Panc1 (cell line): ENCODE measurements at regions of chr7 and their contacts with region 1.

Region 1: GRCh38 chr7:25093268-25093826 is 31.7 kb downstream of the CYCS start:
- DNase-seq: peak; percentile 76
- ATAC-seq: peak; percentile 94
- H3K4me3 ChIP-seq: peak overlapping the region; percentile 23 to 53
- H3K27ac ChIP-seq: no peak overlapping the region
- H3K4me1 ChIP-seq: no peaks in the 10 kb centered on the region
- H3K27me3 ChIP-seq: peaks cover 6% of the 10 kb centered on the region; the same call in 1 of the 2 replicates
- CTCF ChIP-seq: peak; percentile 98

Region 2: DNA sequence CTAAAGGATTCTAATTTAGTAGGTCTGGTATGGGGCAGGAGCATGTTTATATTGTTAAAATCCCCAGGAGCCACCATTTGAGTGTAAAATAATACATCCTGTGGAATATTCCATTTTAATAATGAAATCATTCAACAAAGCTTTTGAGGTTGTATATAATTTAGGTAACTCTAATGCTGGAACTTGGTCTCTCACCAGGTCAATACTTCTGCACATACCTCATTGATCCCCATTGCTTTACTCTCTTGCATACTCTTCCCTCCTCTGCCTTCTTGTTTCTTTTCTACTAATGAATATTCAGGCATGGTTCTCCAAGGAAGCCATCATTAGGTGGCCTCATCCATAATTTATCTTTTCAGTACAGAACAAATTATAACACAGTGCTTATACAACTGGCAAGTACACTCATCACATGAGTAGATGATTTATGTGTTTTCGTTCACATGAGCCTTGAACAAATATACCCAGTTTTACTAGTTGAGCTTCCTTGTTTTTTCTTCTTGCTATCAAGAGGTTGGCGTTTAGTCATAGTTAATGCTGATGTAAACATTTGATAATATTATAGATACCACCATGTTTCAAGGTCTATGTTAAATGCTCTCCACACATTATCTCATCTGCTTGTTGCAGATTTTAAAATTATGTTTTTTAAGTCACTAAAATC is 512.9 kb before region 1 on chr7:
- CTCF ChIA-PET with region 1: no interaction called
- POLR2A ChIA-PET with region 1: interaction called, 13 read pairs
- in situ Hi-C with region 1: no loop called
- intact Hi-C with region 1: no loop called
- DNase-seq: no peak
- ATAC-seq: no peak
- H3K4me3 ChIP-seq: no peak overlapping the region
- H3K27ac ChIP-seq: no peak overlapping the region; the same call in 1 of the 2 replicates
- H3K4me1 ChIP-seq: peaks cover 20% of the 10 kb centered on the region
- H3K27me3 ChIP-seq: no peaks in the 10 kb centered on the region
- CTCF ChIP-seq: no peak

Region 3: GRCh38 chr7:24715661-24716479 is 377.5 kb before region 1 on chr7:
- CTCF ChIA-PET with region 1: no interaction called
- POLR2A ChIA-PET with region 1: no interaction called
- in situ Hi-C with region 1: no loop called
- intact Hi-C with region 1: loop called (anchors 10 kb)
- DNase-seq: peak; percentile 25
- ATAC-seq: peak; percentile 89
- H3K4me3 ChIP-seq: no peak overlapping the region
- H3K27ac ChIP-seq: no peak overlapping the region
- H3K4me1 ChIP-seq: no peaks in the 10 kb centered on the region
- H3K27me3 ChIP-seq: no peaks in the 10 kb centered on the region
- CTCF ChIP-seq: peak; percentile 80

Region 4: DNA sequence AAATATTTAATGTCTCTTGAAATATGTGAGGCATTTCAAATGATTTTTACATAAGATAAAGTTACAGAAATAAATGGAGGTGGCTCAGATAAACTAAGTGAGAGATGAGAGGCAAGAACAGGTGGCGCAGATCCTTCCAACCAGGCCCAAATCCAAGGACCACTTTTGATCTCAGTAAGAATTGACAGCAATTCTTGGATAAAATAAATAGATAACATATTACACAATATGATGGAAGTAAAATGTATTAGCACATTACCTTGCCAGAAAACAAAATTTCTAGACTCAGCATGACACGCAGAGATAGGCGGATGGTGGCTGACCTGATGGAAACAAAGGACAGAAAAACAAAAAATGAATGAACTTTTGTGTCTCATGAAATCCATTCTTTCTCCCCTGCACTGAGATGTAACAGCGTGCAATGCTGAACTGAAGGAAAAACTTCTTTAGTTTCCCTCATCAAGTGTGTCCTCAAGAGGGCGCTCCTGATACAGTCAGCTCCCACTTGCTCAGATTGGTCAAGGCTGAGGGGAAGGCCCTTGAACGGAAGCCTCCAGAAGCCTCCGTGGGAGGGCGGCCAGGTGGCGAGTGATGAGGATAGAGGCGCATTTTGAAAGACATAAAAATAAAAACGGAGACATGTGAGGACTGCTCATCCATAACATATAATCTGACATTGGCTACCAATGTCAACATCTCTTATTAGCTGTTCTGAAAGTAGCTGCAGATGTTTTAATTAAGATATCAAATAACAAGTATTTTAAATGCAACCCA is 273.2 kb before region 1 on chr7:
- CTCF ChIA-PET with region 1: interaction called, 16 read pairs
- POLR2A ChIA-PET with region 1: no interaction called
- in situ Hi-C with region 1: no loop called
- intact Hi-C with region 1: no loop called
- DNase-seq: peak; percentile 82
- ATAC-seq: peak; percentile 91
- H3K4me3 ChIP-seq: no peak overlapping the region
- H3K27ac ChIP-seq: no peak overlapping the region
- H3K4me1 ChIP-seq: peaks cover 11% of the 10 kb centered on the region; the same call in 1 of the 2 replicates
- H3K27me3 ChIP-seq: no peaks in the 10 kb centered on the region
- CTCF ChIP-seq: peak; percentile 95

Region 5: DNA sequence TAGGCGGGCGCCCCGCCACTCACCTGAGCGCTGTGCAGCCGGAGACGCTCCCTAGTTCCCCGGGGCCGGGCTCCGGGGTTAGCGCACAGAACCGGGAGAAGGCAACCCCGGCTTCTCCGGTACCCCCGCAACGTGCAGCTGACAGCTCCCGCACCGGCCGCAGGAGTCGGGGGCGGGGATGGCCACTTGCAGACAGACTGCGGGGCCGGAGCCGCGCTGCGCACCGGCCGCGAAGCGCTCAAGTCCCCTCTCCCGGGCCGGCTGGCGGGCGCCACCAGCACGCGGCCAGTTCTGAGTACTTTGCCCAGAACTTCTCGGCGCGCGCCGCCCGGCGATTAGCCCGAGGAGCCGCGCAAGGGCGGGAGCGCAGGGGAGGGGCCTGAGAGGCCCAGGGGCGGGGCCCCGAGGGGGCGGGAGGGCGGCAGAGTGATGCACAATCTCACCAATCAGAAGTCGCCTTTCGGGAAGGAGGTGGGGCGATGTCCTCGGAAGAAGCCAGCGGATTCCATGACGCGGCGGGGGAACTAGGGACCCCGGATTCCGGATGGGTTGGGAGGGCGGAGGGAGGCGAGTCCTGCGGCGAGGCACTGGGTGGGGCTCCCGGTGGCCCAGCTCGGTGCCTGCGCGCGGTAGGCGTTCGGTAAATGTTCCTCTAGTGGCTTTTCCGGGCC is 113.3 kb before region 1 on chr7 and contains the start of gene OSBPL3:
- CTCF ChIA-PET with region 1: interaction called, 12 read pairs
- POLR2A ChIA-PET with region 1: no interaction called
- in situ Hi-C with region 1: no loop called
- intact Hi-C with region 1: loop called (anchors 5 kb)
- DNase-seq: peak; percentile 57
- ATAC-seq: peak; percentile 91
- H3K4me3 ChIP-seq: peak within 1 kb of the TSS; percentile 74 to 79
- H3K27ac ChIP-seq: peak within 1 kb of the TSS; percentile 75
- H3K4me1 ChIP-seq: peaks cover 6% of the 10 kb centered on the region; the same call in 1 of the 2 replicates
- H3K27me3 ChIP-seq: peaks cover 12% of the 10 kb centered on the region
- CTCF ChIP-seq: no peak
- total RNA-seq, gene OSBPL3: 9.2 TPM